ENCODE measurements at regions of chr10 and their contacts with region 1.

Region 1: GRCh38 chr10:3472287-3473051 is 299.9 kb upstream of the PITRM1 start:
- DNase-seq: no peak
- H3K4me3 ChIP-seq: no peak overlapping the region
- H3K27ac ChIP-seq: peak overlapping the region in 2 of 3 donors; percentile 35 to 70
- H3K4me1 ChIP-seq: peaks cover 0 to 6% of the 10 kb centered on the region in 2 donors
- H3K27me3 ChIP-seq: no peaks in the 10 kb centered on the region
- CTCF ChIP-seq: no peak
- POLR2A ChIP-seq: no peak

Region 2: GRCh38 chr10:3757638-3758490 is 285.4 kb after region 1 on chr10:
- intact Hi-C with region 1: loop called (anchors 10 kb)
- DNase-seq: no peak
- H3K4me3 ChIP-seq: no peak overlapping the region
- H3K27ac ChIP-seq: no peak overlapping the region
- H3K4me1 ChIP-seq: no peaks in the 10 kb centered on the region
- H3K27me3 ChIP-seq: no peaks in the 10 kb centered on the region
- CTCF ChIP-seq: no peak
- POLR2A ChIP-seq: no peak